Psoas muscle (tissue), 8 donors: ENCODE measurements at regions of chr11 and their contacts with region 1.

Region 1: DNA sequence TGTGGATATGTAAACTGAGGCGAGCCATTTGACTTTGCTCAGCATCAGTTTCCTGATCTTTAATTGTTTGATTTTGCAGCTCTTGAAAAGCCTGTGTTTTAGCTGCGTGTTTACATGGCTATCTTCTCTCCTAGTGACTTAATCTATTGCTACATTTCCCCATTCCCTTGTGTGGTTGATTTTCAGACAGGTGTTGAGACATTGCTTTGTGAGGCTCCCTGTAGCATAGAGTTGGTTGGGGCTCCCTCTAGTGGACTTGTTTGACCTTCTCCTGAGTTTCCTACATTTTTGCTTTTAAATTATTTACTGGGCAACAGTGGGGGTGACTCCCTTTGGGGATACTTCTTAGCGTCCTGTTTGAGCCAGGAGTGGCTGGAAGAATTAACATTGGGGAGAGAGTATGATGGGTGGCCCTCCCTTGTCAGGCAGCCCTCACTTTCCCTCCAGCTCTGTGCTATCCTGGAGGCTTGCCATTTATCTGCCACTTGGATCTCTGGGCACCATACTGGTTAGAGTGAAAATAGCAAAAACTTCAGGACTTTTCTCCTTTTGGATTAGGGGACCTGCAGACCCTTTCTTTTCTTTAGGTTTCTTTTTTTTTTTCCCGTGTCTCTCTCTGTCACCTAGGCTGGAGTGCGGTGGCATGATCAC is 9.2 kb upstream of the CBL start:
- DNase-seq: no peak
- ATAC-seq: peak; percentile 93 to 98 (median 96)
- H3K4me3 ChIP-seq: no peak overlapping the region
- H3K27ac ChIP-seq: no peak overlapping the region
- H3K4me1 ChIP-seq: peaks cover 2% of the 10 kb centered on the region
- H3K27me3 ChIP-seq: no peaks in the 10 kb centered on the region
- CTCF ChIP-seq: peak; percentile 73

Region 2: GRCh38 chr11:118689851-118690552 is 507.0 kb before region 1 on chr11:
- intact Hi-C with region 1: no loop called
- DNase-seq: peak; percentile 82 to 96
- ATAC-seq: peak; percentile 95 to 98 (median 97)
- H3K4me3 ChIP-seq: peak overlapping the region; percentile 69
- H3K27ac ChIP-seq: peak overlapping the region; percentile 80
- H3K4me1 ChIP-seq: peaks cover 11% of the 10 kb centered on the region
- H3K27me3 ChIP-seq: no peaks in the 10 kb centered on the region
- CTCF ChIP-seq: peak; percentile 76

Region 3: GRCh38 chr11:119101759-119102423 is 95.1 kb before region 1 on chr11 and contains the start of gene DPAGT1:
- intact Hi-C with region 1: loop called in 1 of 2 experiments (anchors 5 kb)
- DNase-seq: peak; percentile 84 to 90
- ATAC-seq: peak; percentile 95 to 96 (median 96)
- H3K4me3 ChIP-seq: peak within 1 kb of the TSS; percentile 97
- H3K27ac ChIP-seq: peak within 1 kb of the TSS; percentile 90
- H3K4me1 ChIP-seq: peaks cover 31% of the 10 kb centered on the region
- H3K27me3 ChIP-seq: no peaks in the 10 kb centered on the region
- CTCF ChIP-seq: no peak
- total RNA-seq, gene DPAGT1: 9.4 to 12.9 (median 12.3) TPM

Region 4: GRCh38 chr11:119144825-119145486 is 52.0 kb before region 1 on chr11:
- intact Hi-C with region 1: loop called (anchors 1 to 5 kb)
- DNase-seq: peak; percentile 56 to 66
- ATAC-seq: peak; percentile 69 to 87 (median 82)
- H3K4me3 ChIP-seq: no peak overlapping the region
- H3K27ac ChIP-seq: no peak overlapping the region
- H3K4me1 ChIP-seq: peaks cover 9% of the 10 kb centered on the region
- H3K27me3 ChIP-seq: peaks cover 0 to 6% (median 0%) of the 10 kb centered on the region in 3 donors
- CTCF ChIP-seq: peak; percentile 67

Region 5: GRCh38 chr11:119168471-119169281 is 28.3 kb before region 1 on chr11 and contains the start of gene NLRX1:
- intact Hi-C with region 1: loop called in 1 of 2 experiments (anchors 1 kb)
- DNase-seq: peak; percentile 86 to 92
- ATAC-seq: peak; percentile 93 to 95 (median 94)
- H3K4me3 ChIP-seq: peak within 1 kb of the TSS; percentile 95
- H3K27ac ChIP-seq: peak within 1 kb of the TSS; percentile 96
- H3K4me1 ChIP-seq: peaks cover 4% of the 10 kb centered on the region
- H3K27me3 ChIP-seq: no peaks in the 10 kb centered on the region
- CTCF ChIP-seq: peak; percentile 82
- total RNA-seq, gene NLRX1: 18.1 to 28.7 (median 27.1) TPM